ENCODE measurements at regions of chr3 and their contacts with region 1.

Region 1: DNA sequence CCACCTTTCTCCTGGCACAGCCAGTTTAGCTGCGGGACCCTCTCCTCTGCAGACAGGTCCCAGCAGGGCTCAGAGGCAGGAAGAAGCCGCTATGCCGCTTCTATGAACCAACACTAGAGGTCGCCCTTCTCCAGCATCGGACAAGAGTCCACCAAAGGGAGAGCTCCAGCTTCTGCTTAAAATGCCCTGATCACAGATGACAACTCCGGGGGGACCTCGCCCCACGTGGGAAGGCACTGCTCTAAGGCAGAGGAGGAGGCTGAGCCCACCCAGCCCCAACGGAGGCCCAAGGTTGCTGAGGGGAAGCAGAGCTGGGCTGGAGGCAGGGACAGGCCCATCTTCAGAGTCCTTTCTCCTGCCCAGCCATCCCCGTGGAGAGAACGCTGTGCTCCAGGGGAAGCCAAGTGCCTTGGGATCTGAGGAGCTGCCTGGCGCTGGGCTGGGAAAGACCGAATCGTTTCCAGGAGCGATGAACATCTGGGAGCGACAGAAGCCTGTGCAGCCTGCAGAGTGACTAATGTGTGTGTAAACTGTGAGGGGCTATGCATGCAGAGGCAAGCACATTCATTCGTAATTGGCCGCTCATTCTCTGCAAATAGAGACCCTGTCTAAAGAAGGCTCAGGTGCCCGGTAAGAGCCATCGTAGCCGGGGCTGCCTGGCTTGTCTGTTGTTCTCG is 43.5 kb upstream of the BDH1 start:
- DNase-seq: peak; percentile 86
- ATAC-seq: peak; percentile 98
- H3K4me3 Mint-ChIP-seq: no peak overlapping the region
- H3K27ac Mint-ChIP-seq: peak overlapping the region; percentile 53
- H3K4me1 Mint-ChIP-seq: peaks cover 16% of the 10 kb centered on the region
- H3K27me3 Mint-ChIP-seq: no peaks in the 10 kb centered on the region
- CTCF ChIP-seq: peak; percentile 92

Region 2: GRCh38 chr3:197555281-197556261 is 43.7 kb before region 1 on chr3 and contains the start of gene BDH1:
- CTCF ChIA-PET with region 1: interaction called, 17 read pairs
- POLR2A ChIA-PET with region 1: interaction called, 3 read pairs
- intact Hi-C with region 1: no loop called
- DNase-seq: peak; percentile 85
- ATAC-seq: peak; percentile 49
- H3K4me3 Mint-ChIP-seq: peak within 1 kb of the TSS; percentile 80
- H3K27ac Mint-ChIP-seq: peak within 1 kb of the TSS; percentile 88
- H3K4me1 Mint-ChIP-seq: peaks cover 23% of the 10 kb centered on the region
- H3K27me3 Mint-ChIP-seq: peaks cover 17% of the 10 kb centered on the region
- CTCF ChIP-seq: no peak
- total RNA-seq, gene BDH1: 118 to 126 TPM

Region 3: GRCh38 chr3:197573048-197573767 is 26.0 kb before region 1 on chr3:
- CTCF ChIA-PET with region 1: interaction called, 11 read pairs
- POLR2A ChIA-PET with region 1: no interaction called
- intact Hi-C with region 1: no loop called
- DNase-seq: no peak
- ATAC-seq: no peak
- H3K4me3 Mint-ChIP-seq: no peak overlapping the region
- H3K27ac Mint-ChIP-seq: no peak overlapping the region
- H3K4me1 Mint-ChIP-seq: peaks cover 8% of the 10 kb centered on the region
- H3K27me3 Mint-ChIP-seq: peaks cover 16% of the 10 kb centered on the region
- CTCF ChIP-seq: no peak

Region 4: GRCh38 chr3:197613199-197613598 is 14.0 kb after region 1 on chr3:
- CTCF ChIA-PET with region 1: interaction called, 96 read pairs
- POLR2A ChIA-PET with region 1: interaction called, 4 read pairs
- intact Hi-C with region 1: no loop called
- DNase-seq: peak; percentile 74
- ATAC-seq: peak; percentile 91
- H3K4me3 Mint-ChIP-seq: no peak overlapping the region
- H3K27ac Mint-ChIP-seq: peak overlapping the region; percentile 90
- H3K4me1 Mint-ChIP-seq: peaks cover 25% of the 10 kb centered on the region
- H3K27me3 Mint-ChIP-seq: no peaks in the 10 kb centered on the region
- CTCF ChIP-seq: no peak

Region 5: DNA sequence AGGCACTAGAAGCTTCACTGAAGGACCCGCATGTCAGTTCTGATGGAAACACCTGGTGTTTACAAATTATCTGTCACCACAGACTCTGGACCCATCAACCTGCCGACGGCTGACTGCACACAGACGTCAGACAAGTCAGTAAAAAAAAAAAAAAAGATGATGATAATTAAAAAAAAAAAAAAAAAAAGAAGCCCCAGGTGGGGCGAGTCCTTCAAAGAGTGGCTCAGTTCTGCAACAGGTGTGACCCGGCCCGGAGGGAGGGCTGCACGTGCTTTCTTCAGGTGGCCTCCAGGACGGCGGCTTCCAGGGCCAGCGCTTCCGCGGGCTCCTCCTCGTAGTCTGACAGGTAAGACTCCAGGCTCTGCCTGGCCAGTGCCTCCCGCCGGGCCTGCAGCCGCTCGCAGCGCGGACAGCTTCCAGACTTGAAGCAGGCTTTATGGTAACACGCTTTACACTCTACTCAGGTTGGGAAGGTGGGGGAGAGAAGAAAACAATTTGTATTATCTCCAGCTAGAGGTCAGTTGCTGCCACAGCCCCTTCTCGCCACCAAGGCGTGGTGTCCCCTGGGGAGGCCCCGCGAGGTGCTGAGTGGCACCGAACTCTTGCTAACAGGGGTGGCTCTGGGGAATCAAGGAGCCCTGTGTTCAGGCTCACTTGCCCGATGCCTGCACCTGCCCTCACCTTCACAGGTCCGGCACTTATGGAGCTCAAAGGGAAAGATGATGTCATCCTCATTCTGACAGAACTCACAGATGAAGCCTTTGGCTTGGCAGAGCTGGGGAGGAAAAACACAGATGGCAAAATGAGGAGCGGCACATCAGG is 75.7 kb after region 1 on chr3:
- CTCF ChIA-PET with region 1: interaction called, 63 read pairs
- POLR2A ChIA-PET with region 1: interaction called, 4 read pairs
- intact Hi-C with region 1: no loop called
- DNase-seq: no peak
- ATAC-seq: no peak
- H3K4me3 Mint-ChIP-seq: no peak overlapping the region
- H3K27ac Mint-ChIP-seq: no peak overlapping the region
- H3K4me1 Mint-ChIP-seq: no peaks in the 10 kb centered on the region
- H3K27me3 Mint-ChIP-seq: no peaks in the 10 kb centered on the region
- CTCF ChIP-seq: no peak